Esophagus muscularis mucosa (tissue), 4 donors: ENCODE measurements at regions of chr15 and their contacts with region 1.

Region 1: GRCh38 chr15:41894791-41895463 is 1.1 kb upstream of the SPTBN5 start:
- DNase-seq: no peak
- H3K4me3 ChIP-seq: peak overlapping the region; percentile 15 to 29 (median 20)
- H3K27ac ChIP-seq: peak overlapping the region; percentile 23 to 66 (median 42)
- H3K4me1 ChIP-seq: peaks cover 24 to 34% (median 27%) of the 10 kb centered on the region in 4 donors
- H3K27me3 ChIP-seq: no peaks in the 10 kb centered on the region
- CTCF ChIP-seq: no peak
- EP300 ChIP-seq: no peak
- POLR2A ChIP-seq: no peak

Region 2: GRCh38 chr15:41827880-41828806 is 66.8 kb before region 1 on chr15 and contains the start of gene JMJD7:
- intact Hi-C with region 1: loop called (anchors 5 kb)
- DNase-seq: peak; percentile 99
- H3K4me3 ChIP-seq: peak within 1 kb of the TSS; percentile 74 to 79 (median 77)
- H3K27ac ChIP-seq: peak within 1 kb of the TSS; percentile 84 to 94 (median 88)
- H3K4me1 ChIP-seq: peaks cover 22 to 35% (median 28%) of the 10 kb centered on the region in 4 donors
- H3K27me3 ChIP-seq: no peaks in the 10 kb centered on the region
- CTCF ChIP-seq: no peak
- EP300 ChIP-seq: no peak
- POLR2A ChIP-seq: peak; percentile 14
- total RNA-seq, gene JMJD7: 6.2 to 9.6 (median 7.5) TPM

Region 3: DNA sequence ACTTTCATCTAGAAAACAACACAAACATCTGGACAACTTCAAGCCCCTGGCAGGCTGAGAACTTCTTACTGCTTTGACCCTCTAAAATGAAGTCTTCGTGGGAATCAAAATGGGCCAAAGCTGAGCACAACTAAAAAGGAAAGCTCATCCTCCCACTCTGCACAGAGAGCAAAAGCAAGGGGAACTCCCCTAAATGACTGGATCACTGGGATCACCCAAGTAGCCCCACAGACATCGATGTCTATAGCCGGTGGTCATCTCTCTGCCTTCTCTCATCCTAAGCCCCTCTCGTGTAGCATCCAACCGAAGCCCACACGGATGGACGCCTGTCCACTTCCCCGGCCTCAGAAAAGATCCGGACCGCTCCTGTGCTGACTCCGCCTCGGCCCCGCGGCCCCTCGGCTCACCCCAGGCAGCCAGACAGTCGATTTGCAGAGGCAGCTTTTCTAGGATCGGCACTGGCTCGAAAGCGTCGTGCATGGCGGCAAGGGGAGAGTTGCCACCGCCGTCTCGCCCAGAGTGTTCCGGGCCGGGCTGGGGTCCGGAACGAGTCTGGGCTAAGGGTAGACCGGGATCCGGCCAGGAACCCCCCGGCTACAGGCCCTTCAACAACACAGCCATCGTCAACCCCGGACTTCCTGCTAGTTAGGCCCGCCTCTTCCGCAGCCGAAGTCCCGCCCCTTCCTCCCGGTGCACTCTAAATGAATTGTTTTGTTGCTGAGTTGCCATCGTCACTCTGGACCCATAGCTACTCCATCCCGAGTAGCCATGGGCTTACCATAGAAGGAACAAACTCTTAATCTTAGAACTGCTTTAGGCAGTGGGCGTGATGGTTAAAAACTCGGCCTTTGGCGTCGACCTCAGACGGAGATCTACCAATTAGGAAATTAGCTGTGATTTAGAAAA is 313.0 kb after region 1 on chr15 and contains the start of gene VPS39:
- intact Hi-C with region 1: no loop called
- DNase-seq: peak; percentile 95
- H3K4me3 ChIP-seq: peak within 1 kb of the TSS; percentile 72 to 97 (median 86)
- H3K27ac ChIP-seq: peak within 1 kb of the TSS; percentile 78 to 87 (median 81)
- H3K4me1 ChIP-seq: peaks cover 15 to 40% (median 24%) of the 10 kb centered on the region in 4 donors
- H3K27me3 ChIP-seq: no peaks in the 10 kb centered on the region
- CTCF ChIP-seq: no peak
- EP300 ChIP-seq: no peak
- POLR2A ChIP-seq: no peak
- total RNA-seq, gene VPS39: 50.8 to 83.5 (median 56.2) TPM